PC-3 (cell line): ENCODE measurements at regions of chr3 and their contacts with region 1.

Region 1: DNA sequence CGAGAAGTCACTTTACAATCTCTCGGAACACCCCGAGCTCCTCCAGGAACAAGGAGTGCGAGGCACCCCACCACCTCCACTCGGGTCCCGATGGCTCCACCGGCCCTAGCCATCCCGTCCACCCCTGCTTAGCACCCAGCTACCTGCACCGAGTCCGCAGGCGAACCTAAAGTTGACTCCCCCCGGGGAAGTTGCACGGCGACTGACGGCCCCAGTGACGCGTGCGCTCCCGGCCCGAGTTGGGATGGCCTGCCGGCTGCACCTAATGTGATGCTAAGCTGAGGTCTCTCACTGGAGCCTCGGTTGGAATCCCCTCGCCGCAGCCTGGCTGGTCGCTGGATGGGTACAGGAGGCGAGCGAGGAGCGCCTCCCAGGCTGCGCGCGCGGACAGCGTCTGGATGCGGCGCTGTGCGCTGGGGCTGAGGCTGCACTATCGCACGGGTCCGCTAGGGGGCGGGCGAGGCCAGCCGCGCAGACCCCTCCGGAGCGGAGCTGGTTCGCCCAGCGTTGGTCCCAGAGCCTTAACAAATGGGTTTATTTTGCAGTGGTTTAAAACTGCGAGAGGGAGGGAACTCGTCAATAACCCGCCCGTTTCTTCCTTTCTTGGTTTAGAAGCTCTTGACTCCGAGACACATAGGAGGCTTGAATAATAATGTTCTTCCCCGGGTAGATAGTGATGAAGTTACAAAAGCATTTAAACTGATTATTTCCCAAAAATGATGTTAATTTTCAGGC is at the start of gene OXTR:
- DNase-seq: peak; percentile 90
- ATAC-seq: peak; percentile 86
- H3K4me3 ChIP-seq: peak within 1 kb of the TSS; percentile 82
- H3K27ac ChIP-seq: no peak within 1 kb of the TSS
- H3K4me1 ChIP-seq: peaks cover 37% of the 10 kb centered on the region; the same call in 1 of the 2 replicates
- H3K27me3 ChIP-seq: no peaks in the 10 kb centered on the region
- CTCF ChIP-seq: peak; percentile 99
- total RNA-seq, gene OXTR: 21.5 and 23.1 TPM in 2 replicates

Region 2: GRCh38 chr3:8678751-8679150 is 90.5 kb before region 1 on chr3:
- CTCF ChIA-PET with region 1: no interaction called
- POLR2A ChIA-PET with region 1: no interaction called
- intact Hi-C with region 1: loop called (anchors 1 kb)
- DNase-seq: no peak
- ATAC-seq: no peak
- H3K4me3 ChIP-seq: no peak overlapping the region
- H3K27ac ChIP-seq: no peak overlapping the region
- H3K4me1 ChIP-seq: peaks cover 32% of the 10 kb centered on the region
- H3K27me3 ChIP-seq: no peaks in the 10 kb centered on the region
- CTCF ChIP-seq: no peak

Region 3: GRCh38 chr3:8713901-8714759 is 55.1 kb before region 1 on chr3:
- CTCF ChIA-PET with region 1: no interaction called
- POLR2A ChIA-PET with region 1: no interaction called
- intact Hi-C with region 1: no loop called
- DNase-seq: no peak
- ATAC-seq: no peak
- H3K4me3 ChIP-seq: no peak overlapping the region
- H3K27ac ChIP-seq: no peak overlapping the region
- H3K4me1 ChIP-seq: peaks cover 14% of the 10 kb centered on the region
- H3K27me3 ChIP-seq: no peaks in the 10 kb centered on the region
- CTCF ChIP-seq: peak; percentile 32; the same call in 1 of the 2 replicates

Region 4: DNA sequence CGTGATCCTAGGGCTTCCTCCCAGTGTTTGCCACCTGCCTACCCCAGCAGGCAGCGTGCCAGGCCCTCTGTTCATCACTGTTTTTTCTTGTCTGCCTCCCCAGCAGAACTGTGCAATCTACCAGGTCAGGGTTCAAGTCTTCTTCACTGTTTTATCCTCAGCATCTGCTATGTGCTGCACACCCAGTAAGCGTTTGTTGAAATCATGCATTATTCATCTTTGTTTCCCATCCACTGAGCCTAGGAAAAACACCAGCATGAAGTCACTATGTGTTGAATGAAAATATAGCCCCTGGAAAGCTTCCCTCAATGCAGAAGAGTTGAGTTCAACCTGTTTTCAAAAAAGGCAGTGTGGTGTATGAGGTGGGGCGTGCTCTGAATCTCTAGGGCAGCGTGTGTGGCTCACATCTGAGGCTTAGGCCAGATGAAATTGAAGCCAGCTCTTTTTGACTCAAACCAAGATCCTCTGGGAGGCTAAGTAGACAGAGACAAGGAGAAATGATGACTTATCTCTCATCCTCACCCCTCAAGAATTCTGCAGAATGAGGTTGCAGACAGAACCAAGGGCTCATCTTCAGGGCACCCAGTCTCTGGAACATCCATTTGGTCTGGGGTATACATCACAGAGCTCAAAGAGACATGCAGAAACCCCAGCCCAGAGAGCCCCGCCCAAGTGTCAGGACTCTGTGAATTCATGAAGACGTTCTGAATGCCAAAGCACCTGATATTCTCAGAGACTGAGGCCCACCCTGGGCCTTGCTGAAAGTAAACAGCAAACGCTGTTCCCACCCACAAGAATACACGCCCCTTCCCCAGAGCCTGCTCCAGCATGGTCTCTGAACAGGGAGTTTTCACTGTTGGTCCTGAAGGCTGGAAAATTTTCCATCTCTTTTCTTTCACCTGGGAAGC is 41.4 kb before region 1 on chr3:
- CTCF ChIA-PET with region 1: no interaction called
- POLR2A ChIA-PET with region 1: no interaction called
- intact Hi-C with region 1: no loop called
- DNase-seq: no peak
- ATAC-seq: no peak
- H3K4me3 ChIP-seq: no peak overlapping the region
- H3K27ac ChIP-seq: no peak overlapping the region
- H3K4me1 ChIP-seq: peaks cover 19% of the 10 kb centered on the region; the same call in 1 of the 2 replicates
- H3K27me3 ChIP-seq: no peaks in the 10 kb centered on the region
- CTCF ChIP-seq: no peak

Region 5: GRCh38 chr3:8856721-8857120 is 87.5 kb after region 1 on chr3:
- CTCF ChIA-PET with region 1: no interaction called
- POLR2A ChIA-PET with region 1: no interaction called
- intact Hi-C with region 1: no loop called
- DNase-seq: no peak
- ATAC-seq: no peak
- H3K4me3 ChIP-seq: no peak overlapping the region
- H3K27ac ChIP-seq: no peak overlapping the region
- H3K4me1 ChIP-seq: peaks cover 7% of the 10 kb centered on the region
- H3K27me3 ChIP-seq: no peaks in the 10 kb centered on the region
- CTCF ChIP-seq: no peak

Region 6: GRCh38 chr3:8869613-8870012 is 100.4 kb after region 1 on chr3:
- CTCF ChIA-PET with region 1: interaction called, 4 read pairs
- POLR2A ChIA-PET with region 1: no interaction called
- intact Hi-C with region 1: loop called (anchors 1 kb)
- DNase-seq: peak; percentile 99
- ATAC-seq: peak; percentile 95
- H3K4me3 ChIP-seq: no peak overlapping the region
- H3K27ac ChIP-seq: peak overlapping the region; percentile 94
- H3K4me1 ChIP-seq: peaks cover 57% of the 10 kb centered on the region
- H3K27me3 ChIP-seq: no peaks in the 10 kb centered on the region
- CTCF ChIP-seq: no peak

Region 7: DNA sequence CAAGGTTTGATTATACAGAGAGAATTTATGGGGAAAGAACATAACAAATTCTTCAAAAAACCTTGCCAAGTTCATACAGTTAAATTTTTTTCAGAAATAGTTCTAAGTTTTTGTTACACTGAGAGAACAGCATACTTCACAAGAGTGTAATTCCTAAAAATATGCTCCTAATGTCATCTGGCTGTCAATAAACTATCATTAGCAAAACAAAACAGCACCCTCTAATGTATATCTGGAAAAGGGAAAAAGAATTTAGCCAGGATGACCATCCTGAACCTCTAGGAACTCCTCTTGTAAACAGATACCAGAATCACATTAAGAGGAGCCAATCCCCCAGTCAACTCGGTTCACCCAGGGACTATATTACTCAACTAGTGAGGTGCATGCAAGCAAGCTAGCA is 130.7 kb after region 1 on chr3:
- CTCF ChIA-PET with region 1: interaction called, 3 read pairs
- POLR2A ChIA-PET with region 1: no interaction called
- intact Hi-C with region 1: loop called (anchors 2 kb)
- DNase-seq: peak; percentile 14
- ATAC-seq: peak; percentile 37; the same call in 1 of the 2 replicates
- H3K4me3 ChIP-seq: no peak overlapping the region
- H3K27ac ChIP-seq: no peak overlapping the region
- H3K4me1 ChIP-seq: no peaks in the 10 kb centered on the region
- H3K27me3 ChIP-seq: no peaks in the 10 kb centered on the region
- CTCF ChIP-seq: peak; percentile 44; the same call in 1 of the 2 replicates

Region 8: DNA sequence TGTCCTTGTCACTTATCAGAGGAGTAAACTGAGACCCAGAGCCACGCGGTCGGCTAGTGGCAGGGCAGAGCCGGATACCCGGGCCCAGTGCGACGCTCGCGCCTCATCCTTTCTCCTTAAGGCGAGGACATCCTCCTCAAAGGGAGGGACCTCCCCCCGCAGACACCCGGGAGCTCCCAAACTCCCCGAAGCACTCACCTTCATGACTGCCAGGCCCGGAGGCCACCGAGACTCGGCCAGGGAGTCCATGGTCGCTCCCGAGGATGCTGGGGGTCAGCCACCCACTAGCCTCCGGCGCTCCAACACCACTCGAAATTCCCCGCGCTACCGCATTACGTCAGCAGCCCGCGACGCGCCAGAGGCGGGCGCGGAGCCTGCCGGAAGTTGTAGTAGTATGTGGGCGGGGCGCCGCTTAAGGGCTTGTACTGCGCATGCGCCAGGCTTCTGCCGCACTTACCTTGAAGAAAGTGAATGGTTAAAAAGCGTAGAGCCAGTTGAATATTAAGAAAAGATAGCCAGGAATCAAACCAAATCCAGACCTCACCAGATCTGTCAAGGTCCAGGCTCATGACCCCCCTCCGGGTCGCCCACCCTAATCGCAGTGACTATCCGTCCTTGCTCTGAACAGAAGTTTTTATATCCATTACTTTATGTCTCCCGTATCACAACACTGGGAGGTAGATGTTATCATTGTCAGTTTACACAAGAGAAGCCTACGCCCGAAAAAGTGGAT is 194.0 kb after region 1 on chr3 and contains the start of gene RAD18:
- CTCF ChIA-PET with region 1: interaction called, 4 read pairs
- POLR2A ChIA-PET with region 1: no interaction called
- intact Hi-C with region 1: loop called (anchors 2 kb)
- DNase-seq: peak; percentile 97
- ATAC-seq: peak; percentile 54
- H3K4me3 ChIP-seq: peak within 1 kb of the TSS; percentile 94
- H3K27ac ChIP-seq: peak within 1 kb of the TSS; percentile 94
- H3K4me1 ChIP-seq: peaks cover 42% of the 10 kb centered on the region
- H3K27me3 ChIP-seq: no peaks in the 10 kb centered on the region
- CTCF ChIP-seq: no peak
- total RNA-seq, gene RAD18: 22.8 and 46.6 TPM in 2 replicates